ENCODE measurements at regions of chr9 and their contacts with region 1.

Region 1: GRCh38 chr9:21031091-21031807 is at the start of gene HACD4:
- DNase-seq: peak; percentile 48 to 85 (median 84)
- ATAC-seq: peak; percentile 95
- H3K4me3 ChIP-seq: peak within 1 kb of the TSS; percentile 58
- H3K27ac ChIP-seq: no peak within 1 kb of the TSS
- H3K4me1 ChIP-seq: no peaks in the 10 kb centered on the region
- H3K27me3 ChIP-seq: no peaks in the 10 kb centered on the region
- total RNA-seq, gene HACD4: 0.97 to 1.7 (median 1.1) TPM

Region 2: GRCh38 chr9:21081999-21082398 is 50.8 kb after region 1 on chr9:
- intact Hi-C with region 1: no loop called
- DNase-seq: no peak
- ATAC-seq: peak in 1 of 2 donors; percentile 25
- H3K4me3 ChIP-seq: no peak overlapping the region
- H3K27ac ChIP-seq: no peak overlapping the region
- H3K4me1 ChIP-seq: no peaks in the 10 kb centered on the region
- H3K27me3 ChIP-seq: no peaks in the 10 kb centered on the region

Region 3: DNA sequence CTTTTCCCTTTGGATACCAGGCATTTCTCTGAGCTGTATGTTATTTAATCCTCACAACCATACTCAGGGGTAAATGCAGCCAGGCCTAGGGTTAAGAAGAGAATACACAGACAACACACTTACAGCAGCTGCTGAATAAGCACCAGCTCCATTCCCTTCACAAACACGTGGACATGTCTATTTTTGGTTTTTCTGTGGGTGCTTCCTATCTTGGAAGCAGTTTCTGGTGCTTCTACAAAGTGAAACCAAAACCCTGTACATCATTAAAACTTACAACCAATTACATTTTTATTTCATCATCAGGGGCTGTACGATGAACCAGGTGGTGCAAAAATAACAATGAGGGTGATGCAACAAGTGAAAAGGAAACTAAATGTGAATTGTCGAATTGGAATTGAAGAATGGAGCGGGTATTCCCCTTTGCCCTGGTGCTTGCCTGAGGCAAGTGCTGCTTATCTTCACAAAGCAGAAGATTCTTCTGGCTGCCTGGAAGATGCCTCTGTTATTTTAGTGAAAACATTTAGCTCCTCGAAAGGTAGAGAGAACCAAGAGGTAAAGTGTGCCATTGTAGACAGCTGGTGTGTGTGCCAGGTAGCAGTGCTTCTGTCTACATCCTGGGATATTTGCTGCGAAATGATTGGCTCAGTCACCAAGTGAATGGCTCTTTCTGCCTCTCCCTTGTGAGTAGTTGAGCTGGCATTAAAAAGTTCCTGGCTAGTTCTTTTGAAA is 65.1 kb after region 1 on chr9:
- intact Hi-C with region 1: loop called in 1 of 4 experiments (anchors 10 kb)
- DNase-seq: no peak
- ATAC-seq: peak; percentile 63 to 75
- H3K4me3 ChIP-seq: peak overlapping the region; percentile 4
- H3K27ac ChIP-seq: no peak overlapping the region
- H3K4me1 ChIP-seq: peaks cover 4% of the 10 kb centered on the region
- H3K27me3 ChIP-seq: no peaks in the 10 kb centered on the region

Measured in right cardiac atrium (tissue), 5 donors.